ENCODE measurements at regions of chr2 and their contacts with region 1.

Region 1: GRCh38 chr2:144659731-144660275 is 139.9 kb upstream of the ZEB2 start:
- DNase-seq: peak; percentile 100
- H3K4me3 Mint-ChIP-seq: peak overlapping the region; percentile 22
- H3K27ac Mint-ChIP-seq: peak overlapping the region; percentile 96
- H3K4me1 Mint-ChIP-seq: peaks cover 40% of the 10 kb centered on the region
- H3K27me3 Mint-ChIP-seq: no peaks in the 10 kb centered on the region
- CTCF ChIP-seq: no peak

Region 2: DNA sequence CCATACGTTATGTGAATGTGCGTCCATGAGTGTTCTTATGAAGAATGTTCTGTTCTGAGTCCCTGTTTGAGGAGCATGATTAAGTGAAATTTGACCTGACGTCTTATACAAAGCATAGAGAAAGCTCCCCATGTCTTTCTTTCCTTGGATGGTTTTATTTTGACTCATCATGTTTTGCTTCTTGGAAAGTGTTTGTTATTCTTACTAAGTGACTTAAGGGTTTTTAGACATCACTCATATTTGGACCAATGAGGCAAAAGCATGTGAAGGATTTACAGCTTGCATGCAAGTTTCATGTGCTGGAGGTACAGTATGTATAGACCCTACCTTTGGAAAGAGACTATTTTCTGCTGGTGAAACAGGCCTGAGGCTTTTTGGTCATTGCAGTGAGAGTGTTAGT is 106.4 kb before region 1 on chr2:
- CTCF ChIA-PET with region 1: interaction called, 6 read pairs
- POLR2A ChIA-PET with region 1: interaction called, 23 read pairs
- intact Hi-C with region 1: no loop called
- DNase-seq: peak; percentile 92
- H3K4me3 Mint-ChIP-seq: no peak overlapping the region
- H3K27ac Mint-ChIP-seq: peak overlapping the region; percentile 99
- H3K4me1 Mint-ChIP-seq: peaks cover 39% of the 10 kb centered on the region
- H3K27me3 Mint-ChIP-seq: no peaks in the 10 kb centered on the region
- CTCF ChIP-seq: no peak

Region 3: DNA sequence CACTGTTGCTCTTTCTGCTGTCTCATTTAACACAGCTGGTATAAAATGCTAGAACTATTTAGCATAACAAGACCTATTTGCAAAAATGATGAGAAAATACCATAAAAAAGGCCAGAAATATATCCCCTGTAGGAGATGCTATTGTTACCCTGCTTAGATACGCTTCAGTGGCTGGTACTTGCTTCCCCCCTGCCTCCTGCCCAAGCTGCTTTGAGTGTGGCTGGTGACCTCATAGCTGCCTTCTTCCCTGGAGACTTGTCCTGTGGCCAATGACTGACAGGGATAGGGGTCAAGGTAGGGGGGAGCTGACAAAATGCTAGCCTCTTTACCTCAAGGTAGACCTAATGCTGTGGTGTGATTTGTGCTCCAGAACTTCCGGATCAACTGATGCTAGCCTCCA is 10.3 kb after region 1 on chr2:
- CTCF ChIA-PET with region 1: interaction called, 3 read pairs
- POLR2A ChIA-PET with region 1: interaction called, 16 read pairs
- intact Hi-C with region 1: no loop called
- DNase-seq: no peak
- H3K4me3 Mint-ChIP-seq: no peak overlapping the region
- H3K27ac Mint-ChIP-seq: peak overlapping the region; percentile 31
- H3K4me1 Mint-ChIP-seq: peaks cover 19% of the 10 kb centered on the region
- H3K27me3 Mint-ChIP-seq: no peaks in the 10 kb centered on the region
- CTCF ChIP-seq: no peak

Region 4: DNA sequence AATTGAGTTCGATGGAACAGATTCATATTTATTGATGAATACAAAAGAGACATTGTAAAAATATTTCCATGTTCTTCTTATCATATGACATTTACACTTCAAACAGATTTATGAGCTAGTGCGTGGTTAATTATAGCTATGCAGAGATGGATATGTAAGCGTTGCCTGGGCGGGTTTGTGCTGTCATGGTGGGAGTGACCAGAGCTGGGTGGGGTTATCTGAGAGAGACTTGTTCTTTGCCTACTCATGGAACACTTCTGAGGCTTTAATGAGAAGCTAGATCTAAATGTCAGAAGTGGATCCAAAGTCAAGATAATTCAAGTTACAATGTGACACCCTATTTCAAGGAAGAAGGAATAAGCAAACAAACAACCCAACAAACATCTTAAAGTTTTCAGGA is 22.4 kb after region 1 on chr2:
- CTCF ChIA-PET with region 1: no interaction called
- POLR2A ChIA-PET with region 1: interaction called, 18 read pairs
- intact Hi-C with region 1: no loop called
- DNase-seq: no peak
- H3K4me3 Mint-ChIP-seq: no peak overlapping the region
- H3K27ac Mint-ChIP-seq: peak overlapping the region; percentile 1
- H3K4me1 Mint-ChIP-seq: peaks cover 10% of the 10 kb centered on the region
- H3K27me3 Mint-ChIP-seq: no peaks in the 10 kb centered on the region
- CTCF ChIP-seq: no peak

Measured in MCF 10A (cell line).